ENCODE measurements at regions of chr17 and their contacts with region 1.

Region 1: GRCh38 chr17:80575057-80575875 is 30.6 kb downstream of the RPTOR start:
- DNase-seq: peak; percentile 94
- H3K4me3 Mint-ChIP-seq: no peak overlapping the region
- H3K27ac Mint-ChIP-seq: no peak overlapping the region
- H3K4me1 Mint-ChIP-seq: peaks cover 9% of the 10 kb centered on the region
- H3K27me3 Mint-ChIP-seq: no peaks in the 10 kb centered on the region

Region 2: GRCh38 chr17:80477647-80478478 is 97.4 kb before region 1 on chr17:
- CTCF ChIA-PET with region 1: interaction called, 5 read pairs
- POLR2A ChIA-PET with region 1: no interaction called
- intact Hi-C with region 1: loop called (anchors 5 kb)
- DNase-seq: peak; percentile 58
- H3K4me3 Mint-ChIP-seq: no peak overlapping the region
- H3K27ac Mint-ChIP-seq: no peak overlapping the region
- H3K4me1 Mint-ChIP-seq: peaks cover 11% of the 10 kb centered on the region
- H3K27me3 Mint-ChIP-seq: peaks cover 61% of the 10 kb centered on the region